ENCODE measurements at regions of chr2 and their contacts with region 1.

Region 1: DNA sequence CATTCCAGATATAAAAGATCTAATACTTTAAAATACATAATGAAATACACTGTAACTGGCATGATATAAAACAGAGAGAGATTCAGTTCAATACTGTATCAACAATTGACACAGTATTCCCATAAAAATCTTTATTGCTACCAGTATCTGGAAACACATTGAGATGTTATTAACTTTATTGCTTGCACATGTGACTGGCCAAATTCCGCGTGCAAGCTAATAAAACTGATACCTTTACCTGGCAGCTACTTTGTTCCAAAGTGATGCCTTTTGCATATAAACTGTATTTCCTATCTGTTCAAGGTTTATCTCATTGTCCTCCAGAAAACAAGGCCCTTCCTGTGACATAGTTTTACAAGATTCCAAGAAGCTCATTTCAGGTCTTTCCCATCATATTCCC is 15.4 kb upstream of the REG1B start:
- DNase-seq: no peak
- H3K4me3 Mint-ChIP-seq: no peak overlapping the region
- H3K27ac Mint-ChIP-seq: no peak overlapping the region
- H3K4me1 Mint-ChIP-seq: no peaks in the 10 kb centered on the region
- H3K27me3 Mint-ChIP-seq: no peaks in the 10 kb centered on the region

Region 2: DNA sequence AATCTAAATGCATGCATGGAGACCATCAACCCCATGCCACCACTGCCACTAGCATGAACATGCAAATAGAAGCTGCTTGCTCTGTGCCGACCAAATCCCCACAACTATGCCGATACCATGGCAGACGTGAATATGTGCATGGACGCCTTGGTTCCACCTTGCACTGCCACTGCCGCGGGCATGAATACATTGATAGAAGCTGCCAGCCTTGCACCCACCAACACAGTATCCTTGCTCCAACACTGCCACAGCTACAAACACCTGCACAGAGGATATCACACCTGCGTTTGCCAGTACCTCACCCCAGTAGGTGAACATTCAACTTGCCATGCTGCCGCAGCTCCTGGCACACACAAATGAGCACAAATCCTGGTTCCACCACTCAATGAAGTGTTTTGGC is 605.1 kb before region 1 on chr2:
- CTCF ChIA-PET with region 1: no interaction called
- intact Hi-C with region 1: no loop called
- DNase-seq: no peak
- H3K4me3 Mint-ChIP-seq: no peak overlapping the region
- H3K27ac Mint-ChIP-seq: no peak overlapping the region
- H3K4me1 Mint-ChIP-seq: no peaks in the 10 kb centered on the region
- H3K27me3 Mint-ChIP-seq: no peaks in the 10 kb centered on the region

Region 3: GRCh38 chr2:79116997-79117928 is 14.0 kb after region 1 on chr2:
- CTCF ChIA-PET with region 1: no interaction called
- intact Hi-C with region 1: loop called (anchors 1 kb)
- DNase-seq: no peak
- H3K4me3 Mint-ChIP-seq: no peak overlapping the region
- H3K27ac Mint-ChIP-seq: no peak overlapping the region
- H3K4me1 Mint-ChIP-seq: no peaks in the 10 kb centered on the region
- H3K27me3 Mint-ChIP-seq: no peaks in the 10 kb centered on the region

Measured in activated naive CD4-positive, alpha-beta T cell treated with anti-CD3 and anti-CD28 coated beads for 36 hours (primary cell).